ENCODE measurements at regions of chr3 and their contacts with region 1.

Region 1: GRCh38 chr3:15108082-15108545 is 9.2 kb upstream of the RBSN start:
- ATAC-seq: peak; percentile 87 to 99 (median 93)
- H3K4me3 ChIP-seq: no peak overlapping the region
- H3K27ac ChIP-seq: no peak overlapping the region
- H3K4me1 ChIP-seq: no peaks in the 10 kb centered on the region

Region 2: GRCh38 chr3:15205934-15206661 is 98.0 kb after region 1 on chr3 and contains the start of gene CAPN7:
- in situ Hi-C with region 1: loop called in 3 of 9 experiments (anchors 25 kb)
- ATAC-seq: peak; percentile 88 to 94 (median 92)
- H3K4me3 ChIP-seq: peak within 1 kb of the TSS; percentile 75 to 91 (median 80)
- H3K27ac ChIP-seq: peak within 1 kb of the TSS; percentile 88 to 94
- H3K4me1 ChIP-seq: peaks cover 5 to 7% of the 10 kb centered on the region in 2 donors
- total RNA-seq, gene CAPN7: 23.4 to 44.3 (median 32.6) TPM

Region 3: GRCh38 chr3:15405448-15406050 is 297.4 kb after region 1 on chr3:
- in situ Hi-C with region 1: loop called in 1 of 9 experiments (anchors 25 kb)
- ATAC-seq: peak in 3 of 8 experiments; percentile 65 to 79 (median 68)
- H3K4me3 ChIP-seq: no peak overlapping the region
- H3K27ac ChIP-seq: no peak overlapping the region
- H3K4me1 ChIP-seq: no peaks in the 10 kb centered on the region